ENCODE measurements at regions of chr17 and their contacts with region 1.

Region 1: DNA sequence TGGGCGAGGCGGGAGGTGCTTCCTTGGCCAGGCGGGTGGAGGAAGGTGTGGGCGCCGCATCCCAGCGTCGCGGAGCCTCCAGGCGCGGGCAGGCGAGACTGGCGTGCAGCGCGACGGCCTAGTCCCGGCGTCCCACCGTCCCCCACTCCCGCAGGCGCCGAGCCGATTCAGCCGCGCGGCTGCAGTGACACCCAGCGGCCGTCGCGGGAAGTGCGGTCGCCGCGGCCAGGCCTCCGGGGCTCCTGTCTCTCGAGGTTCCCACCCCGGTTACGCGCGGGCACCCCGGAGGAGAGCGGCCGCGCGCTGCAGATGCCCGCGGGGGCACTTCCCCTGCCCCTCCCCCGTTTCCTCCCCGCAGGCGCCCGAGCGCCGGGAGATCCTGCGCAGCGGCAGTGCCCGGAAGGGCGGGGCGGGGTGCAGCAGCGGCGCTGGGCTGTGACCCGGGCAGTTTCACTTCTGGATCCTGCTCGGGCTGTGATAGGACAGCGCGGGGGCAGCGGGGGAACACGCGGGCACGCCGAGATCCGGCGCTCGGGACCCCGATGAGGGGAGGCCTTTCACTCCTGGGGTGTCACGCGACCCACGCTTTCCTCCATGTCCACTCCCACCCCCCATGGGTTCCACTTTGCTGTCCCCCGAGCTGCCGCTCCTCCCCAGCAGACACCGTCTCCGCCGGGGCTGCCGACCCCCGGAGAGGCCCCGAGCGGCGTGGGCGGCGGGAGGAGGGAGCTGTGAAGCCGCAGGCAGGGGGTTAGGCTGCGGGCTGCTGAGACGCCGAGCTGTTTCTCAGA is 16.6 kb downstream of the GRB7 start:
- DNase-seq: peak; percentile 99
- ATAC-seq: peak; percentile 90
- H3K4me3 Mint-ChIP-seq: peak overlapping the region; percentile 88
- H3K27ac Mint-ChIP-seq: peak overlapping the region; percentile 93
- H3K4me1 Mint-ChIP-seq: peaks cover 47% of the 10 kb centered on the region
- H3K27me3 Mint-ChIP-seq: no peaks in the 10 kb centered on the region

Region 2: DNA sequence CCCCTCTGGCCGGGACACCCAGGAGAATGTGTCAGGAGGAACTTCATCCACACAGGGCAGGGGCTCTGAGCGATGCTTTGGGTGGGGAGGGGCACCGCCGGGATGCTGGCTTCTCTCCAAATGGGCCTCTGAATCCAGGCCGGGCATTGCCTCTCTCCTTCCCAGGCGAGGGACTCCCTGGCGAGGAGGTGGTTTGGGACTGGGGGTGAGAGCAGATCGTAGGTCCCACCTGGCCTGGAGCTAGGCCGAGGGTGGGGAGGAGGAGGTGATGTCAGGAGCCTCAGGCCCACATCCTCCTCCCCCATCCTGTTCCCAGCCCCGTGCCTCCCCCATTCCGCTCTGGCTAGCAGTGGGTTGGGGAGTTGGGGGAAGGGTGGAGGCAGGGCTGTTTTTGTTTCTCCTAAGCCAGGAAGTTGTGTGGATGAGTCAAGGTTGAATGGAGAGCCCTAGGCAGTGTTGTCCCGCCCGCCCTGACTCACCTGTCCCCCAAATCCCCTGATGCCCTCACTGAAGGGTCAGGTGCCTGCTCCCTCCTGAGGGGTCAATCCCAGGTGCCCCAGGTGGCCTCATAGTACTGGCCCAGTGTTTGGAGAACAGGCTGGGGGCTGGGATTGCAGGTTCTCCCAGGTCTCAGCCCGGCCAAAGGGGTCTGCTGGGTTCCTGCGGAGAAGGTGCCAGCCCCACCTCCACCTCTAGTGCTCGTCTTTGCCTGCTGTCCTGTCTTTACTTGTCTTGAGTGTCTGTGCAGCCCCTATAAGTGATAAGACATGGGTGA is 13.8 kb before region 1 on chr17:
- POLR2A ChIA-PET with region 1: no interaction called
- DNase-seq: no peak
- ATAC-seq: no peak
- H3K4me3 Mint-ChIP-seq: no peak overlapping the region
- H3K27ac Mint-ChIP-seq: no peak overlapping the region
- H3K4me1 Mint-ChIP-seq: peaks cover 17% of the 10 kb centered on the region
- H3K27me3 Mint-ChIP-seq: peaks cover 5% of the 10 kb centered on the region

Region 3: GRCh38 chr17:39813631-39814030 is 59.3 kb after region 1 on chr17:
- POLR2A ChIA-PET with region 1: interaction called, 10 read pairs
- DNase-seq: peak; percentile 48
- ATAC-seq: peak; percentile 93
- H3K4me3 Mint-ChIP-seq: peak overlapping the region; percentile 75
- H3K27ac Mint-ChIP-seq: peak overlapping the region; percentile 84
- H3K4me1 Mint-ChIP-seq: peaks cover 41% of the 10 kb centered on the region
- H3K27me3 Mint-ChIP-seq: no peaks in the 10 kb centered on the region

Region 4: DNA sequence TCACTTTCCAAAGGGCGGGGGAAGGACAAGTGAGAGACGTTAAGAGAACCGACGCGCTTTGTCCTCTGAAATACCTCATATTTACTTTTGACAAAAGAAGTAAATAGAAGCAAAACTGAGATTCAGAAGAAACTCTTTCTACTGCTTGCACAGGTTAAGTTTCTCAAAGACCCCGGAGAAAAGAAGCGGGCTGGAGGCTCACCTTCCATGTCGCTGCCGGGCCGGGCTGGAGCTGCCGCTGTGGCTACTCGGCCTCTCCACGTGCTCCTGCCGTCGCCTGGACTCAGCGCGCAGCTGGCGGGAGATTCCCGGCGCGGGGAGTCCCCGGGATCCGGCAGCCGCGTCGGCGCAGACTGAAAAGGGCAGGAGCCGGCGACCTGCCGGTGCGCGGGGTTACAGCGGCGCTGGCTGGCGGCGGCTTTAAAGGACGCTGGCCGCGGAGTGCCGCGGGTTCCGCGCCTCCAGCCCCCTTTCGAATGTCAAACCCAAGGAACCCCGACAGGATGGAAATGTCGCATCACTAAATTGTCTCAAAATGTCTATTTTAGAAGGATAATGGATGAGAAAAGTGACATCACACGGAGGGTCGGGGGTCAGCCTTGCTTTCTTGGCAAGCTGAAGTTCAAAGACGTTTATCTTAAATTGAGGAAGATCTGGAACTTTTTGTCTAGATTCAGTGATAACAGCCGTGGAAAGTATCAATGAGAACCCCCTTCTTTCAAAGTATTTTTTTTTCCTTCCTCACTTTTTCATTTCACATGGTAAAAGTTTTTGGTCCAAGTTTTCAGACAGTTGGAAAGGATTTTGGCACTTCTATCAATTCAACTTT is 109.8 kb after region 1 on chr17 and contains the start of gene IKZF3:
- POLR2A ChIA-PET with region 1: interaction called, 10 read pairs
- DNase-seq: peak; percentile 82
- ATAC-seq: peak; percentile 77
- H3K4me3 Mint-ChIP-seq: peak within 1 kb of the TSS; percentile 91
- H3K27ac Mint-ChIP-seq: peak within 1 kb of the TSS; percentile 92
- H3K4me1 Mint-ChIP-seq: peaks cover 49% of the 10 kb centered on the region
- H3K27me3 Mint-ChIP-seq: no peaks in the 10 kb centered on the region
- total RNA-seq, gene IKZF3: 78.5 to 83.5 TPM